Heart right ventricle (tissue), 16 donors: ENCODE measurements at regions of chr10 and their contacts with region 1.

Region 1: GRCh38 chr10:84205049-84205852 is 10.9 kb downstream of the CDHR1 start:
- DNase-seq: peak; percentile 45 to 54
- ATAC-seq: peak; percentile 40 to 74 (median 62)
- H3K4me3 ChIP-seq: no peak overlapping the region
- H3K27ac ChIP-seq: no peak overlapping the region
- H3K4me1 ChIP-seq: no peaks in the 10 kb centered on the region
- H3K27me3 ChIP-seq: peaks cover 0 to 13% (median 3%) of the 10 kb centered on the region in 7 donors
- CTCF ChIP-seq: peak; percentile 34 to 76 (median 66)

Region 2: GRCh38 chr10:84147347-84147746 is 57.9 kb before region 1 on chr10:
- intact Hi-C with region 1: loop called in 4 of 10 experiments (anchors 2 to 10 kb)
- DNase-seq: no peak
- ATAC-seq: no peak
- H3K4me3 ChIP-seq: no peak overlapping the region
- H3K27ac ChIP-seq: no peak overlapping the region
- H3K4me1 ChIP-seq: peaks cover 0 to 7% (median 0%) of the 10 kb centered on the region in 9 donors
- H3K27me3 ChIP-seq: no peaks in the 10 kb centered on the region
- CTCF ChIP-seq: no peak

Region 3: DNA sequence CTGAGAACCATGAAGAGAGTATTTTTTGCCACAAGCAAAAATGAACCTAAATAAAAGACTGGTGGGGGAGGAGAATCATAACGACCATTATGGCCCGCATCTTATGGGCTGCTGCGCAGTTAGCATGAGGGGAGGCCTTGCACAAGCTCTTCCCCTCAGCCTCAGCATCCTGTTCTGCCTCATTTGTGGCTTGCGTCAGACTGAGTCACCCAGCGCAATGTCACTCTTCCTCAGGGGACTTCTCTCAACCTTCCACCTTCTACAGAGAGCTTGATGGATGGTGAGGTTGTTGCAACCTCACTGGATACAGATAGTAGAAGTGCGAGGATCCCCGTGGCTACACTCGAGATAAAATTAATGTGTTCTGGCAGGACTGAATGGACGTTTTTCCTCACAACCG is 48.5 kb before region 1 on chr10:
- intact Hi-C with region 1: loop called in 1 of 10 experiments (anchors 5 kb)
- DNase-seq: no peak
- ATAC-seq: peak in 3 of 8 donors; percentile 39 to 75 (median 53)
- H3K4me3 ChIP-seq: no peak overlapping the region
- H3K27ac ChIP-seq: peak overlapping the region in 1 of 10 donors; percentile 39
- H3K4me1 ChIP-seq: peaks cover 0 to 8% (median 0%) of the 10 kb centered on the region in 9 donors
- H3K27me3 ChIP-seq: peaks cover 0 to 10% (median 8%) of the 10 kb centered on the region in 7 donors
- CTCF ChIP-seq: no peak

Region 4: DNA sequence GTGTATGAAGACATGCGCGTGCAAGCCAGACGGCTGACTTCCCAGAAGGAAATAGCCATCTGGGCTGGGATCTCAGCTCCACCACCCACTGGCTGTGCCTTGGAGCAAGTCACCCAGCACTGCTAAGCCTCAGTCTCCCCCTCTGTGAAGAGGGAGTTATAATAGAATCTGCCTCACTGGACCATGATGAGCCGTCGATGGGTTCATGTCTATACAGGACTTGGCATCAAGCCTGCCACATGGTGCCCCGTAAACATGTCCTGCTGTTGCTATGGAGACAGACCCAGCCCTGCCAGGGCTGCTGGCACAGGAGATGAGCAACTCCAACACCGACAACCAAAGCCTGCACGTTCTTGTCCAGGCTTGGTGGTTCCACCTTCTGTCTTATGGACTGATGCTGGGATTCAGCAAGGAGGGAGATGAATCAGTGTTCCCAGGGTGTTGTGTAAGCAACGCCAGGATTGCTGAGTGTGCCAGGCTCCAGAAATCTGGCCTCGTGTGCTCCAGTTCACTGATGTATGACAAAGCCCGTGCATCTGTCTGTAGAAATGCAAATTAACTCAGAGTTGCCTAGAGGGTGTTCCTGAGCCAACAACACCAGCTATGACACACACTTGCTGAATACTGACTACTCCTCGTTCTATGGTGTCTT is 26.1 kb before region 1 on chr10:
- intact Hi-C with region 1: no loop called
- DNase-seq: no peak
- ATAC-seq: peak in 3 of 8 donors; percentile 27 to 65 (median 38)
- H3K4me3 ChIP-seq: no peak overlapping the region
- H3K27ac ChIP-seq: no peak overlapping the region
- H3K4me1 ChIP-seq: peaks cover 0 to 7% (median 0%) of the 10 kb centered on the region in 9 donors
- H3K27me3 ChIP-seq: peaks cover 0 to 19% (median 0%) of the 10 kb centered on the region in 7 donors
- CTCF ChIP-seq: no peak

Region 5: GRCh38 chr10:84548869-84549268 is 343.6 kb after region 1 on chr10:
- intact Hi-C with region 1: no loop called
- DNase-seq: no peak
- ATAC-seq: no peak
- H3K4me3 ChIP-seq: no peak overlapping the region
- H3K27ac ChIP-seq: no peak overlapping the region
- H3K4me1 ChIP-seq: no peaks in the 10 kb centered on the region
- H3K27me3 ChIP-seq: peaks cover 0 to 47% (median 10%) of the 10 kb centered on the region in 7 donors
- CTCF ChIP-seq: peak in 2 of 9 donors; percentile 10 to 15